ENCODE measurements at regions of chr1 and their contacts with region 1.

Region 1: GRCh38 chr1:91582431-91582921 is 81.8 kb downstream of the CDC7 start:
- DNase-seq: peak; percentile 50

Region 2: GRCh38 chr1:91732291-91733107 is 150.0 kb after region 1 on chr1:
- in situ Hi-C with region 1: loop called (anchors 25 kb)
- DNase-seq: peak; percentile 90

Measured in Caki2 (cell line).